ENCODE measurements at regions of chr21 and their contacts with region 1.

Region 1: DNA sequence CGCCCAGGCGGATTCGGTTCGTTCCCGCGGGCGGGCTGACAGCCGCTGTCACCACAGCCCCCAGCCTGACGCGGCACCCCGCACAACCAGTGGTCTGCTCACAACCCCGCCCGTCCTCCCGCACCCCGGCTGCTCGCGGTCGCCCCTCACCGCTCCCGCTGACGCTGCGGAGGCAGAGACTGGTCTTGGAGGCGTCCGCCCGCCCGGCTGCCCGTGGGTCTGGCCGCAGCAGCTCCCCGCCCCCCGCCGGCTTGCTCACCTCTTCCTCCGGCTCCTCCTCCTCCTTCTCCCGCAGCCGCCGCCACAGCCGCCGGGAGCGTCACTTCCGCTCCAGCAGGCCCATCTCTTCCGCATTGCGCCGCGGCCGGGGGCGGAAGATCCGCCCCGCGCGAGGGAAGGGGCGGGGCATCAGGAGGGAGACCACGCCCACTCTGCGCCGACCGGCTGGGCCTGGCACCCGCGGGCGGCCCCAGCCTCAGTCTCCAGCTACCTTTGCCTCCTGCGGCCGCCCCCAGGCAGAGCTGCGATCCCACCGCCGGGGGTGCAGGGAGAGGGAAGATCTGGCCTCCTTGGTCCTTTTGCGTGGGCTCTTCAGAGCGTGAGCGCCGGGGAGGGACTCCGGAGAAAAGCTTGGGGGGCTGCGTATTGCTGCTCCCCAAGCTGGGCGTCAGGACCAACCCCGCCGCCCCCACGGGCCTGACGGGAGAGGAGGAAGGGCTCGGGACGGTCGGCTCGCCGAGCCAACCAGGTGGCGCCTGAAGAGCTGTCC is at the start of gene SYNJ1:
- DNase-seq: peak; percentile 94 to 95 (median 94)
- H3K4me3 ChIP-seq: peak within 1 kb of the TSS; percentile 62 to 92
- H3K4me3 Mint-ChIP-seq: peak within 1 kb of the TSS; percentile 97 to 100 (median 98)
- H3K27ac ChIP-seq: peak within 1 kb of the TSS; percentile 75
- H3K27ac Mint-ChIP-seq: peak within 1 kb of the TSS; percentile 90 to 98 (median 98)
- H3K4me1 ChIP-seq: peaks cover 58% of the 10 kb centered on the region
- H3K4me1 Mint-ChIP-seq: peaks cover 38 to 76% (median 52%) of the 10 kb centered on the region in 4 donors
- H3K27me3 ChIP-seq: no peaks in the 10 kb centered on the region
- H3K27me3 Mint-ChIP-seq: no peaks in the 10 kb centered on the region
- total RNA-seq, gene SYNJ1: 27.6 to 29.4 TPM

Region 2: DNA sequence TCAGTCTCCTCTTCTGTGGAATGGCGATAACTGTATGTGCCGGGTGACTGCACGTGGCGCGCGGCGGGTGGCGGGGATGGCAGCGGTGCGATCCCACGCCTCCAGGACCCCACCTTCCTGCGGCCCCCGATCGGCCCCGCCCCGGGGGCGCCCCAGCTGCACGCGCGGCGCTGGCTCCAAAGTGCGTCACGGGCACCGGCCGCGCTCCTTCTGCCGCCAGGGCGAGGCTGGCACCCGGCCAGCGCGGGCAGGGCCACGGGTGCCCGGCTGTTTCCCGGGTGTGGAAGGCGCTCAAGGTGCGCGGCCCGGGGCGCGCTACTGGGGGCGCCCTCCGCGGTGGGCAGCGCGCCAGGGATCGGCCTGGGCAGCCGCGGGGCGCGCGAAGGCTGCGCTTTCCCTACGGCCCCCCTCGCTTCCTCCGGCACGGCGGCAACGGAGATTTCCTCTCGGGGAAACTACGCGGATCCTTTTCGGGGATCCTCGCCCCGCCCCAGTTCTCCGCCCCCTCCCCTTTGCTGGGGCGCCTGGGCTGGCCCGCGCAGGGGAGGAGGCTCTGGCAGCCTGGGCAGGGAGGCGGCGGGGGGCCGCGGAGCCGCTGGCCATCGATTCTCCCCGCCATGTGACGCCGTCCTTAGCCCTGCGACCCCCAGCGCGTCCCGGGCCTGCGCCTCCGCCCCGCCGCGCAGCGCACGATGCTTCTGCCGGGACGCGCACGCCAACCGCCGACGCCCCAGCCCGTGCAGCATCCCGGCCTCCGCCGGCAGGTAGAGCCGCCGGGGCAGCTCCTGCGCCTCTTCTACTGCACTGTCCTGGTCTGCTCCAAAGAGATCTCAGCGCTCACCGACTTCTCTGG is 315.5 kb before region 1 on chr21 and contains the start of gene EVA1C:
- CTCF ChIA-PET with region 1: no interaction called
- POLR2A ChIA-PET with region 1: interaction called, 4 read pairs
- intact Hi-C with region 1: loop called (anchors 5 kb)
- DNase-seq: peak; percentile 81 to 87 (median 85)
- H3K4me3 ChIP-seq: peak within 1 kb of the TSS; percentile 40 to 83
- H3K4me3 Mint-ChIP-seq: peak within 1 kb of the TSS; percentile 94 to 98 (median 96)
- H3K27ac ChIP-seq: peak within 1 kb of the TSS; percentile 86
- H3K27ac Mint-ChIP-seq: peak within 1 kb of the TSS; percentile 95 to 99 (median 97)
- H3K4me1 ChIP-seq: peaks cover 34% of the 10 kb centered on the region
- H3K4me1 Mint-ChIP-seq: peaks cover 32 to 71% (median 43%) of the 10 kb centered on the region in 4 donors
- H3K27me3 ChIP-seq: no peaks in the 10 kb centered on the region
- H3K27me3 Mint-ChIP-seq: no peaks in the 10 kb centered on the region
- total RNA-seq, gene EVA1C: 17.1 to 17.2 TPM

Region 3: GRCh38 chr21:32612075-32612998 is 115.5 kb before region 1 on chr21 and contains the start of gene CFAP298:
- CTCF ChIA-PET with region 1: no interaction called
- POLR2A ChIA-PET with region 1: interaction called, 15 read pairs
- intact Hi-C with region 1: loop called (anchors 1 kb)
- DNase-seq: peak; percentile 90 to 97 (median 92)
- H3K4me3 ChIP-seq: peak within 1 kb of the TSS; percentile 95 to 99
- H3K4me3 Mint-ChIP-seq: peak within 1 kb of the TSS; percentile 91 to 98 (median 96)
- H3K27ac ChIP-seq: peak within 1 kb of the TSS; percentile 86
- H3K27ac Mint-ChIP-seq: peak within 1 kb of the TSS; percentile 98 to 99 (median 99)
- H3K4me1 ChIP-seq: peaks cover 12% of the 10 kb centered on the region
- H3K4me1 Mint-ChIP-seq: peaks cover 8 to 32% (median 20%) of the 10 kb centered on the region in 4 donors
- H3K27me3 ChIP-seq: no peaks in the 10 kb centered on the region
- H3K27me3 Mint-ChIP-seq: peaks cover 1 to 2% of the 10 kb centered on the region in 2 donors
- total RNA-seq, gene CFAP298: 29.4 to 39.1 TPM

Region 4: GRCh38 chr21:33491373-33492102 is 763.7 kb after region 1 on chr21 and contains the start of gene DNAJC28:
- CTCF ChIA-PET with region 1: no interaction called
- POLR2A ChIA-PET with region 1: no interaction called
- intact Hi-C with region 1: loop called (anchors 1 kb)
- DNase-seq: peak; percentile 92 to 97 (median 94)
- H3K4me3 ChIP-seq: peak within 1 kb of the TSS; percentile 76 to 88
- H3K4me3 Mint-ChIP-seq: peak within 1 kb of the TSS; percentile 83 to 99 (median 94)
- H3K27ac ChIP-seq: peak within 1 kb of the TSS; percentile 64
- H3K27ac Mint-ChIP-seq: peak within 1 kb of the TSS; percentile 74 to 98 (median 95)
- H3K4me1 ChIP-seq: peaks cover 4% of the 10 kb centered on the region
- H3K4me1 Mint-ChIP-seq: peaks cover 7 to 14% (median 11%) of the 10 kb centered on the region in 4 donors
- H3K27me3 ChIP-seq: no peaks in the 10 kb centered on the region
- H3K27me3 Mint-ChIP-seq: peaks cover 0 to 4% of the 10 kb centered on the region in 2 donors
- total RNA-seq, gene DNAJC28: 1.3 to 1.6 TPM

Measured in CD4-positive, alpha-beta memory T cell (primary cell).